Activated CD4-positive, alpha-beta T cell treated with anti-CD3 and anti-CD28 coated beads, Interleukin-2, amount 10 ng/mL, durations not matched to agents 7 days and 5 days (primary cell): ENCODE measurements at regions of chr12 and their contacts with region 1.

Region 1: DNA sequence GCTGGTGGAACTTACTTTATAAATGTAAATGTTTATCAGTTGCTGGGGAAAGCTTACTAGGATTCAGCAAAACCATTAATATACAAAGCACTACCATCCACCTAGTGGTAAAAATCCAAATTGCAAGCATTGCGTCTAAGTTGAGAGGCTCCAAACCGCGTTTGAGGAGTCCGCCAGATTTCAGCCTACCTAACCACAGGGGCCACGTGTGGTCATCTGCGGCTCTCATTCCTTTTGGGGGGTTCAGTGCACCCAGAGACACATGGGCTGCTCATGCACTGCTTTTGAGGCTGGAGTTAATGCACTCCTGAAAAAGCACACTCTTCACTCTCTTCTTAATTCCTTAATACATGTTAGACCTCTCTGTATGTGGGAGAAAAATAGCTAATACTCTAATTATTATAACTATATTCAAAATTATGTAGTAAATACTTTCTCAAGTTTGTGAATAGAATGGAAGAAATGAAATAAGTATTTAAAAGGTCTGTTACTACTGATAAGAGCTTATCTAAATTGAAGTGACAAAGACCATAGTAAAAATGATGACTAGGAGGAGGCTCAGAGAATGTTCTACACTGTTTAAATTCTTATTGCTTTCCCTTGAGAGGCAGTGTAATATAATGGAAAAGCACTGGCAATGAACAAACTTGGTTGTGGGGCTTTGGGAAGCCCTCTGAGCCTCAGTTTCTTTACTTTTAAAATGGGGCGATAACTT is 41.4 kb upstream of the MANSC4 start:
- DNase-seq: peak; percentile 61
- H3K4me3 Mint-ChIP-seq: peak overlapping the region; percentile 14
- H3K27ac Mint-ChIP-seq: no peak overlapping the region
- H3K4me1 Mint-ChIP-seq: peaks cover 30% of the 10 kb centered on the region
- H3K27me3 Mint-ChIP-seq: peaks cover 30% of the 10 kb centered on the region

Region 2: DNA sequence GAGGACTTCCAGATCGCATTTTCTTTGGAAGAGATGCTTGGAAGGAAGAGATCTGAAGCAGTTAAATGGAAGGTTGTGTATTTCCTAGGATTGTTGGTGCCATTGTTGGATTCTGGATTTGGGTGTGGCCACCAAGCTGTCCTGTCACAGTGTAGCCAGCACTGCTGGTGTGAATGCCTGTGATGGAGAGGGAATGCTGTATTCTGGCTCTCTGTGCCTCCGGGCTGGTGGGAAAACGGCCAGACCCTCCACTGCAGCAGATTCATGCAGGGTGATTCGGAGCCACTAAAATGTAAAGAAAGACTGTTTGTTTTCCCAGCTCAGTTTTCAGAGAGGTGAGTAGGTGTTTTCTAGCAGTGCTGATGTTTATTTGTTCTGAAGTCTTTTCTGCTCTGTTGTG is 10.7 kb before region 1 on chr12:
- CTCF ChIA-PET with region 1: interaction called, 13 read pairs
- POLR2A ChIA-PET with region 1: no interaction called
- DNase-seq: no peak
- H3K4me3 Mint-ChIP-seq: no peak overlapping the region
- H3K27ac Mint-ChIP-seq: no peak overlapping the region
- H3K4me1 Mint-ChIP-seq: peaks cover 27% of the 10 kb centered on the region
- H3K27me3 Mint-ChIP-seq: peaks cover 36% of the 10 kb centered on the region

Region 3: GRCh38 chr12:27896419-27896990 is 75.1 kb after region 1 on chr12:
- CTCF ChIA-PET with region 1: no interaction called
- POLR2A ChIA-PET with region 1: no interaction called
- DNase-seq: no peak
- H3K4me3 Mint-ChIP-seq: no peak overlapping the region
- H3K27ac Mint-ChIP-seq: no peak overlapping the region
- H3K4me1 Mint-ChIP-seq: no peaks in the 10 kb centered on the region
- H3K27me3 Mint-ChIP-seq: peaks cover 15% of the 10 kb centered on the region